ENCODE measurements at regions of chr12 and their contacts with region 1.

Region 1: GRCh38 chr12:63766498-63766897 is 13.2 kb upstream of the RXYLT1 start:
- DNase-seq: no peak
- H3K4me3 ChIP-seq: no peak overlapping the region
- H3K27ac ChIP-seq: no peak overlapping the region
- H3K4me1 ChIP-seq: no peaks in the 10 kb centered on the region
- H3K27me3 ChIP-seq: peaks cover 0 to 8% of the 10 kb centered on the region in 2 experiments
- CTCF ChIP-seq: no peak
- POLR2A ChIP-seq: no peak

Region 2: GRCh38 chr12:63706336-63706735 is 60.2 kb before region 1 on chr12:
- CTCF ChIA-PET with region 1: no interaction called
- POLR2A ChIA-PET with region 1: no interaction called
- dilution Hi-C with region 1: no loop called
- intact Hi-C with region 1: no loop called
- DNase-seq: no peak
- H3K4me3 ChIP-seq: no peak overlapping the region
- H3K27ac ChIP-seq: no peak overlapping the region
- H3K4me1 ChIP-seq: no peaks in the 10 kb centered on the region
- H3K27me3 ChIP-seq: peaks cover 0 to 2% of the 10 kb centered on the region in 2 experiments
- CTCF ChIP-seq: no peak
- POLR2A ChIP-seq: no peak

Region 3: GRCh38 chr12:63753744-63754143 is 12.8 kb before region 1 on chr12:
- CTCF ChIA-PET with region 1: interaction called, 23 read pairs
- POLR2A ChIA-PET with region 1: no interaction called
- dilution Hi-C with region 1: no loop called
- intact Hi-C with region 1: no loop called
- DNase-seq: no peak
- H3K4me3 ChIP-seq: no peak overlapping the region
- H3K27ac ChIP-seq: no peak overlapping the region
- H3K4me1 ChIP-seq: no peaks in the 10 kb centered on the region
- H3K27me3 ChIP-seq: peaks cover 0 to 6% of the 10 kb centered on the region in 2 experiments
- CTCF ChIP-seq: no peak
- POLR2A ChIP-seq: no peak

Region 4: GRCh38 chr12:63862214-63863107 is 96.0 kb after region 1 on chr12:
- CTCF ChIA-PET with region 1: no interaction called
- POLR2A ChIA-PET with region 1: no interaction called
- dilution Hi-C with region 1: no loop called
- intact Hi-C with region 1: no loop called
- DNase-seq: peak; percentile 19
- H3K4me3 ChIP-seq: no peak overlapping the region
- H3K27ac ChIP-seq: no peak overlapping the region
- H3K4me1 ChIP-seq: peaks cover 5% of the 10 kb centered on the region
- H3K27me3 ChIP-seq: no peaks in the 10 kb centered on the region
- CTCF ChIP-seq: no peak
- POLR2A ChIP-seq: no peak

Measured in endothelial cell of umbilical vein (primary cell).